Mucosa of descending colon (tissue), 3 donors: ENCODE measurements at regions of chrX and their contacts with region 1.

Region 1: DNA sequence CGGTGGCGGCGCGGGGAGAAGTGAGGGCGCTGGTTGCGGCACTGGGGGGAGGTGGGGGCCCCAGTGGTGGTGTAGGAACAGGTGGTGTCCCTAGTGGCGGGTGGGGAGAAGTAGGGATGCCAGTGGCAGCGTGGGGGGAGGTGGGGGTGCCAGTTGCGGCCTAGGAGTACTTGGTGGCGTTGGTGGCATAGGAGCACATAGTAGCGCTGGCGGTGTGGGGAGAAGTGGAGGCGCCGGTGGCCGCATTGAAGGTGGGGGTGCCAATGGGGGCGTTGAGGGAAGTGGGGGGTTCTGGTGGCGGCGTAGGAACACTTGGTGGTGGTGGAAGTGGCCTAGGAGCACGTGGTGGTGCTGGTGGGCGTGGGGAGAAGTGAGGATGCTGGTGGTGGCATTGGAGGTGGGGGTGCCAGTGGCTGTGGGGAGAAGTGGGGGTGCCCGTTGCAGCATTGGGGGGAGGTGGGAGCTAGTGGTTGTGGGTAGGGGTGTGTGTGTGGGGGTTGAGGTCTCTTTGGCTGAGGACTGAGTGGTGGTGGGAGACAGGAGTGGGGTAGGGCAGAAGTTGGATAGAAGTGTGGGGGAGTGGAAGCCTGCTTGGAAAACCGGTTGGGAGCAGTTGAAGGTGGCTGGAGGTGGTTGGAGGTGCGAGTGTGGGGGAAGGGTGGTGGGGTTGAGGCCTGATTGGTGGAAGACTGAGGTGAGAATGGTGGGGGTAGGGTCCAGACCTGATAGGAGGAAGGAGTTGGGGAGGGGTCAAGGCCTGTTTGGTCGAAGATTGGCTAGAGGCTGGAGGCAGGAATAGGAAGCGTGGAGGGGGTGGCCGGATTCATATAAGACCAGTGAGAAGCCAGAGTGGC is 1.1 kb downstream of the GCNA start:
- DNase-seq: no peak
- ATAC-seq: no peak
- H3K4me3 ChIP-seq: no peak overlapping the region
- H3K4me1 ChIP-seq: no peaks in the 10 kb centered on the region
- CTCF ChIP-seq: no peak

Region 2: DNA sequence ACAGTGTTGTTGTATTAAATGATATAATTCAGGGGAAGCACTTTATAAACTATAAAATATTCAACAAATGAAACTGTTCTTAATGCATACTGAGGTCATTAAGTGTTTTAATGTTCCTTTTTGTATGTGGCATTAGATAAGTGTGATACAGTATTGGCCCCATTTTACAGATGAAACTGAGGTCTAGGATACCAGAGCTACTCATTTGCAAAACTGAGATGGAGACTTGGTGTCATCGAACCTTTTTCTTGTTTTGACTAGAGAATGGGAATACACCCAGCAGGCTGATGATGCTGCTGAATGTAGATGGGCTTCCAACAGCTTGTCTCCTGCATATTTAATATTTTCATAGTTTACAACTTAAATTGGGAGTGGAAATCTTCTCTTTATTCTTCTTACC is 178.7 kb before region 1 on chrX:
- intact Hi-C with region 1: loop called in 1 of 2 experiments (anchors 10 kb)
- DNase-seq: no peak
- ATAC-seq: no peak
- H3K4me3 ChIP-seq: no peak overlapping the region
- H3K4me1 ChIP-seq: no peaks in the 10 kb centered on the region
- CTCF ChIP-seq: no peak

Region 3: GRCh38 chrX:71492231-71493065 is 86.9 kb before region 1 on chrX:
- intact Hi-C with region 1: no loop called
- DNase-seq: peak; percentile 44 to 64 (median 61)
- ATAC-seq: peak; percentile 88
- H3K4me3 ChIP-seq: no peak overlapping the region
- H3K4me1 ChIP-seq: no peaks in the 10 kb centered on the region
- CTCF ChIP-seq: no peak

Region 4: DNA sequence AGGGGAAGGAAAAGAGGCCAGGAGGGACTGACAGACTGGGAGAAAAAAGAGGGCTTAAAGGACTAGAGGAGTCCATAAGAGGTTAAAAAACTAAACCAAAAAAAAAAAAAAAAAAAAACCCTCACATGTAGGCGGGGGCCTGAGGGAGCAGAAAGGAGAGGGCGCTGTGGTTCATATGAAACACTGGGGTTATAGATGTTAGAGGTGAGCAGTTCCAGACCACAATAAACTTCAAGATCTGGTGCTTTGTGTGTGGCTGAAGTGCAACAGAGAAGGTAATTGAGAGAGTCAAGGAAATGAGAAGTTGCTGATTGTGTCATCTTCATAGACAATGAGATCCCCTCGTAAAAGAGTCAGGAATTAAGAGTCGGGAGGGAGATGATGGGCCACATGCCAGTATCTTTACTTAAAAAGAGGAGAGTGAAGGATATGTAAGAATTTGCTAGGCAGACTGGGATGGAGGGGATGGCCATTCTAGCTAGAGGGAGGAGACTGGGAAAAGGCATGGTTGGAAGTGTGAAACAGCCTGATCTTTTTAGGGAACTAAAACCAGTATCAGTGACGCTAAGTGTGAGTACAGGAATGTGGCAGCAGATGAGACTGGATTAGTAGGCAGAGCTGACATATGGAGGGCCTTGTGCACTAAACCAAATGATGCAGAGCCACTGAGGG is 64.9 kb before region 1 on chrX:
- intact Hi-C with region 1: no loop called
- DNase-seq: peak in 1 of 3 donors; percentile 15
- ATAC-seq: peak; percentile 36
- H3K4me3 ChIP-seq: no peak overlapping the region
- H3K4me1 ChIP-seq: no peaks in the 10 kb centered on the region
- CTCF ChIP-seq: no peak

Region 5: DNA sequence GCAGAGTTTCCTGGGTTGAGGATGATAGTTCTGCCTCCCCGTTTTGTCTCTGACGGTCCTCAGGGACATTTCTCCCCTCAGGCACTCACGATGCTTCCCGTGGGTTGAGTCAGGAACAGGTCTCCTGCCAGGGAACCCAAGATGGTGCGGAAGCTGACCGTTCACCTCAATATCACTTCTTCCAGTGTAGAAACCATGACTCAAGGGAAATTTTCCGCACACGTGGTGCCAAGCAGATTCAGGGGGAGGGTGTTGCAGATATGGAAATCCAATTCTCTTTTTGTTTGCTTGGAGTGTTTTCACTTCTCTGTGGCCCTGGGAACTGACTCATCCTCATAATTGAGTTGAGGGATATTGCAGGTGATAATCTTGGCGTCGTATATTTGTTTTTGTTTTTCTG is 230.5 kb after region 1 on chrX:
- intact Hi-C with region 1: no loop called
- DNase-seq: no peak
- ATAC-seq: no peak
- H3K4me3 ChIP-seq: no peak overlapping the region
- H3K4me1 ChIP-seq: no peaks in the 10 kb centered on the region
- CTCF ChIP-seq: no peak